Psoas muscle (tissue), 8 donors: ENCODE measurements at regions of chr1 and their contacts with region 1.

Region 1: DNA sequence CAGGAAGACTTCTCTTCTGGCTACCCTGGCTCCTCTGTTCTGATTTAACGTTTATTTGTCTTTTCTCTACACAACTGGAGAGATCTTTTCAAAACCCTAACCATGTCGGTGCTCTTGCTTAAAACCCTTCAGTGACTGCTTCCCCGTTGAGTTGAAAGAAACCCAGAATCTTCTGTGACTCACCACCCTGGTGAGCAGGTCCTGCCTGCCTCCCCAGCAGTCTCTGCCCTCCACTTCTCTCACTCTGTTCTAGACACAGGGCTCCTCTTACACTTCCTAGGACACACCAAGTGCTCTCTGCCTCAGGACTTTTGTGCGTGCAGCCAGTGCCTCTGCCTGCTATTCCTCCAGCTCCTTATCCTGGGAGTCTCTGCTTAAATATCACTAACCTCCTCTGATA is 131.4 kb downstream of the IER5 start:
- DNase-seq: no peak
- ATAC-seq: no peak
- H3K4me3 ChIP-seq: no peak overlapping the region
- H3K27ac ChIP-seq: no peak overlapping the region
- H3K4me1 ChIP-seq: no peaks in the 10 kb centered on the region
- H3K27me3 ChIP-seq: no peaks in the 10 kb centered on the region
- CTCF ChIP-seq: no peak

Region 2: GRCh38 chr1:180785299-180785698 is 434.6 kb before region 1 on chr1:
- intact Hi-C with region 1: no loop called
- DNase-seq: no peak
- ATAC-seq: no peak
- H3K4me3 ChIP-seq: no peak overlapping the region
- H3K27ac ChIP-seq: no peak overlapping the region
- H3K4me1 ChIP-seq: no peaks in the 10 kb centered on the region
- H3K27me3 ChIP-seq: no peaks in the 10 kb centered on the region
- CTCF ChIP-seq: no peak

Region 3: DNA sequence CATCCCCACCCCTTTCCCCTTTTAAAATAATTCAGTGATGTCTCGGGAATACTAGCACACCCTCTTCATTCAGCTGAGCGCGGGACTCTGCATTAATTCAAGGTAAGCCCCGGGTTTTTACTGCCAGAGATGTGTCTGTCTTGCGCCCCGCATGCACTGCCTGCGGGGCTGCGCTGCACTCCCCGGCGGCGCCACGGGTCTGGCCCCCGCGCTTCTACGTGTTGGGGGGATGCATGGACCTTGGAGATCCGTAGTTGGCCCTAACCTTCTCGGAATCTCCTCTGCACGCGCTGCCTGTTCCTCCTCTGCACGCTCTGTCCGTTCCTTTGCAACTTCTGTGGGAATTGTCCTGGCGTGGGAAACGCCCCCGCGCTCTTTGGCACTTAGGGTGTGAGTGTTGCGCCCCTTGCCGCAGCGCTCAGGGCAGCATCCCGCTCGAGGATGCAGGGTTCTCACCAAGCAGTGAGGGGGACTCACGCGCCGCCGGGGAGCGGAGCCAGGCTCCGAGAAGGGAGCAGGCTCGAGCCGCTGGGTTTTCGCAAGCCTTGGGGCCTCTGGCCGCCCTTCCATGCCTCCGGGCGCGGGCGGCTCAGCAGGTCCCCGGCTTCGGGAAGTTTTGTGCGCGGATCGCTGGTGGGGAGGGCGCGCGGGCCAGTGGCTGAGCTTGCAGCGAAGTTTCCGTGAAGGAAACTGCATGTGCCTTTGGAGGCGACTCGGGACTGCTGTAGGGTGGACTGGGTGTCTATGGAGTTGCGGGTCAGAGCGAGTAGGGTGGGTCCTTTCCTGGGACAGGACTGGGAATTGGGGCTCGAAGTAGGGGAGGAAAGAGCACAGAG is 98.3 kb after region 1 on chr1:
- intact Hi-C with region 1: loop called in 1 of 2 experiments (anchors 10 kb)
- DNase-seq: no peak
- ATAC-seq: peak in 1 of 4 donors; percentile 27
- H3K4me3 ChIP-seq: peak overlapping the region; percentile 31
- H3K27ac ChIP-seq: no peak overlapping the region
- H3K4me1 ChIP-seq: no peaks in the 10 kb centered on the region
- H3K27me3 ChIP-seq: peaks cover 7 to 66% (median 28%) of the 10 kb centered on the region in 3 donors
- CTCF ChIP-seq: no peak